GM10248 (cell line): ENCODE measurements at regions of chr3 and their contacts with region 1.

Region 1: DNA sequence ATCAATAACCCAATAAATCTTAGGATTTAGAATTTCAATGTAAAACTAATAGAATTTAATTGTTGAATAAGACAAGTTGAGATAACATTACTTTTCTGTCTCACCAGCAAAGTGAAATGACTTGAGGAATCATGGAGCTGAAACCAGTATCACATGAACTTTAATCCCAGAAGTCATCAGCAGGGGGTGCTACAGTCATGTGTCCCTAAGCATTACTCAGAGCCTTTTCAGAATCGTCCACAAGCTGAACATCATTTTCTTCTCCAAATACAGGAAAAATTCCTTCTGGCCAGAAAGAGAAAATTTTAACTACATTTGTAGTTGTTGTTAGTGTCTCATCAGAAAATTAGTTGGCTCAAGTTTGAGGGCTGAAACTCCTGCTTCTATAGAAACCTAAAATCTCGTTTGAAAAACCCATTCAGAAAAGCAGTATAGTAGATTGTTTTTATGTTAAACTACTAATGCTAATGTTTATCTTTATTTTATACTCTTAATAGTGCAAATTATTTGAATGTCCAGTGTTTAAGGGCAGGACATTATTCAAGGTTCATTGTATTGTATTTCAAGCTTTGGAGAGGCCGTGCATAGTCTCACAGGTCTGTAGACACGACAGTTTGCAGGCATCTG is 384.1 kb downstream of the PLOD2 start:
- DNase-seq: peak; percentile 17
- CTCF ChIP-seq: peak; percentile 47

Region 2: GRCh38 chr3:145798007-145798406 is 21.1 kb after region 1 on chr3:
- CTCF ChIA-PET with region 1: interaction called, 15 read pairs
- POLR2A ChIA-PET with region 1: no interaction called
- DNase-seq: no peak
- CTCF ChIP-seq: no peak